GM10248 (cell line): ENCODE measurements at regions of chr14 and their contacts with region 1.

Region 1: GRCh38 chr14:23057757-23058653 is 685 bp upstream of the CDH24 start:
- DNase-seq: peak; percentile 90
- CTCF ChIP-seq: peak; percentile 96

Region 2: GRCh38 chr14:21846227-21846885 is 1211.6 kb before region 1 on chr14:
- CTCF ChIA-PET with region 1: no interaction called
- POLR2A ChIA-PET with region 1: no interaction called
- DNase-seq: peak; percentile 28
- CTCF ChIP-seq: peak; percentile 57

Region 3: GRCh38 chr14:22753586-22753985 is 304.4 kb before region 1 on chr14:
- CTCF ChIA-PET with region 1: no interaction called
- POLR2A ChIA-PET with region 1: no interaction called
- DNase-seq: no peak
- CTCF ChIP-seq: no peak

Region 4: GRCh38 chr14:22966783-22967269 is 91.2 kb before region 1 on chr14:
- CTCF ChIA-PET with region 1: interaction called, 79 read pairs
- POLR2A ChIA-PET with region 1: no interaction called
- DNase-seq: no peak
- CTCF ChIP-seq: no peak

Region 5: GRCh38 chr14:23000860-23001259 is 57.1 kb before region 1 on chr14:
- CTCF ChIA-PET with region 1: interaction called, 834 read pairs
- POLR2A ChIA-PET with region 1: no interaction called
- DNase-seq: no peak
- CTCF ChIP-seq: no peak

Region 6: GRCh38 chr14:23015618-23016017 is 42.4 kb before region 1 on chr14:
- CTCF ChIA-PET with region 1: interaction called, 10 read pairs
- POLR2A ChIA-PET with region 1: no interaction called
- DNase-seq: no peak
- CTCF ChIP-seq: no peak

Region 7: DNA sequence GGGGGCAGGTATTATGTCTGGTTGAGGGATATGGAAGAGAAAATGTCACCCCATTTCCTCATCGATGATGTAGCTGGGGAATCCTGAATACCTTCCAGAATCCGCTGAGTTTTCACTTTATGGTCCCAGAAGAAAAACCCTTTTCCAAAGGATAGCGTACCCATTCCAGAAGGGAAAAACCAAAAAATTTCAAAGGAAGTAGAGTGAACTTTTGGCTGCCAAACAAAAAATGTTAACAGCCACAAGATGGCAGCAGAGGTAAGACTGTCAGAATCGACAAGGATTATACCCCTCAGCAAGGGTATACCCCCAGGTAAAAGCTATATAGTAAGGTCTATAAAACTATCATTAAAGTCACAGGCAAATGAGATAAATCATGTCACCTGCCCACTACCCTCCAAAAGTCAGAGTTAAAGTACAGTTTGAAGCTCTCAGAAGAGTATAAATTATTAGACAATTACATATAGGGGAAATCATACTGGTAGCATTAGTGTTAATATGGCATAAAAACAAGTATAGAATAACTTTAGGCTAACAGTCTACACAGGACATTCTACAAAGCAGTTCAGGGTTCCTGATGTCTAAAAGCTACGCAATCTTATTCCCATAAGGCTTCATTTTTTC is 18.9 kb after region 1 on chr14:
- CTCF ChIA-PET with region 1: interaction called, 79 read pairs
- POLR2A ChIA-PET with region 1: no interaction called
- DNase-seq: no peak
- CTCF ChIP-seq: peak; percentile 47

Region 8: GRCh38 chr14:23174276-23175184 is 116.5 kb after region 1 on chr14:
- CTCF ChIA-PET with region 1: no interaction called
- POLR2A ChIA-PET with region 1: no interaction called
- DNase-seq: no peak
- CTCF ChIP-seq: no peak